A549 (cell line): ENCODE measurements at regions of chr17 and their contacts with region 1.

Region 1: DNA sequence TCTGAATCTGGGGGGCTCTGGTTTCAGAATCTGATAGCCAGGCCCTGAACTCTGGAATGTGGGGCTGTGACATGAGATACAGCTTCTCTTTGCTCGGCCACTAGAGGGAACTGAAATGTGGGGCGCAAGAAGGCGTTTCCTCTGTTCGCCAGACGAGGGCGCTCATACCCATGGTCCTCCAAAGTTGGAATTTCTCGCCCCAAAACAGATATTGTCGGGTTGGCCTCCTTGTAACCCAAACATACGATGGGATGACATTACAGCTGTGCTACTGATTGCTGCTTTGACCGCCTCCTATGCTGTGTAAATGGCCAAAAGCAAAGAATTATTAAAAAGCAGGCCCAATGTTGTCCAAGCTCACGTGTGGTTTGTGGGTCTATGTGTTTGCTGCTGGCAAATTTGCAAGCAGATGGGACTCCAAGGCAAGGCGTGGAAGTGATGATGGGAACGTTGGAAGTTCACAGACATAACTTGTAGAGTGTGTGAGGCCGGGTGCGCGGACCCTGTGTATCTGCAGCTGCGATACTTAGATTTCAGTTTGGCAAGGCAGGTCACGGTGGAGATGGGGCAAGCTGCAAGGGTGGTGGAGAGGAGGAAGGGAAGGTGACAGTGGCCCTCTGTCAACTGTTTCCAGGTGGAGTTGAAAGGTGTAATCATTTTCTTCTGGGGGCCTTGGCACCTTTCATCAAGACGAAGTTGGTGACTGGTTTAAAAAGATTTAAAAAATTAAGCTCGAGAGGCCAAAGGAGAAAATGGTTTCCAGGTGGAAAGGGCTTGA is 13.0 kb upstream of the MSI2 start:
- DNase-seq: peak; percentile 77 to 88
- ATAC-seq: peak; percentile 83 to 95
- H3K4me3 ChIP-seq: no peak overlapping the region
- H3K27ac ChIP-seq: peak overlapping the region; percentile 15 to 47; a peak in 3 of 6 replicates
- H3K4me1 ChIP-seq: peaks cover 8% of the 10 kb centered on the region; the same call in 1 of the 3 replicates
- CTCF ChIP-seq: peak; percentile 100
- EP300 ChIP-seq: no peak
- POLR2A ChIP-seq: no peak
- RAD21 ChIP-seq: peak; percentile 99

Region 2: GRCh38 chr17:57071991-57072944 is 171.1 kb before region 1 on chr17:
- CTCF ChIA-PET with region 1: no interaction called
- POLR2A ChIA-PET with region 1: no interaction called
- DNase-seq: no peak
- ATAC-seq: no peak
- H3K4me3 ChIP-seq: no peak overlapping the region
- H3K27ac ChIP-seq: no peak overlapping the region
- H3K4me1 ChIP-seq: no peaks in the 10 kb centered on the region
- CTCF ChIP-seq: no peak
- EP300 ChIP-seq: no peak
- POLR2A ChIP-seq: no peak
- RAD21 ChIP-seq: no peak

Region 3: GRCh38 chr17:57114085-57114673 is 129.2 kb before region 1 on chr17:
- CTCF ChIA-PET with region 1: no interaction called
- POLR2A ChIA-PET with region 1: no interaction called
- DNase-seq: peak; percentile 57 to 76
- ATAC-seq: peak; percentile 40 to 87; a peak in 3 of 6 replicates
- H3K4me3 ChIP-seq: no peak overlapping the region
- H3K27ac ChIP-seq: no peak overlapping the region
- H3K4me1 ChIP-seq: 0 out of 3 replicates have a peak, but pooled peaks cover under 1% of the 10 kb centered on the region
- CTCF ChIP-seq: peak; percentile 65
- EP300 ChIP-seq: no peak
- POLR2A ChIP-seq: no peak
- RAD21 ChIP-seq: peak; percentile 59 to 74

Region 4: DNA sequence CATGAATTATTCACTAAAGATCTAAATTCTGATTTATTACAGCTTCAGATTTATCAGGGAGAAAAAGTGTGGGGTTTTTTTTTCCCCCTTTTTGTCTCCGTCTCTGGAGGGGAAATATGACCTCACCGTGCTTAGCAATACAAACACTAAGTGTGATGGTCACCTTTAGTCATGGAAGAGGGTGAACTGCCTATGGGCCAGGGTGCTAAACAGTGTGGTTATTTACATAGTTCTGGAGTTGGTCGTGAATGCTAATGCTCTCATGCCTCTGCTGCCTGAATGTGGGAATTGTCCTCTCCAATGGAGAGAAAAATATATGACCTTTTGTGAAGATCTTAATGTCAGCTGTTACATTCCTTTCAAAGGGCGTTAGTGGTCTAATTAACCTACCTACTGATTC is 31.8 kb before region 1 on chr17:
- CTCF ChIA-PET with region 1: interaction called, 15 read pairs
- POLR2A ChIA-PET with region 1: no interaction called
- DNase-seq: peak; percentile 17 to 33
- ATAC-seq: peak; percentile 81 to 84; a peak in 5 of 6 replicates
- H3K4me3 ChIP-seq: no peak overlapping the region
- H3K27ac ChIP-seq: peak overlapping the region in 1 of 2 experiments; percentile 33; a peak in 1 of 6 replicates
- H3K4me1 ChIP-seq: peaks cover 26% of the 10 kb centered on the region
- CTCF ChIP-seq: no peak
- EP300 ChIP-seq: no peak
- POLR2A ChIP-seq: no peak
- RAD21 ChIP-seq: no peak

Region 5: DNA sequence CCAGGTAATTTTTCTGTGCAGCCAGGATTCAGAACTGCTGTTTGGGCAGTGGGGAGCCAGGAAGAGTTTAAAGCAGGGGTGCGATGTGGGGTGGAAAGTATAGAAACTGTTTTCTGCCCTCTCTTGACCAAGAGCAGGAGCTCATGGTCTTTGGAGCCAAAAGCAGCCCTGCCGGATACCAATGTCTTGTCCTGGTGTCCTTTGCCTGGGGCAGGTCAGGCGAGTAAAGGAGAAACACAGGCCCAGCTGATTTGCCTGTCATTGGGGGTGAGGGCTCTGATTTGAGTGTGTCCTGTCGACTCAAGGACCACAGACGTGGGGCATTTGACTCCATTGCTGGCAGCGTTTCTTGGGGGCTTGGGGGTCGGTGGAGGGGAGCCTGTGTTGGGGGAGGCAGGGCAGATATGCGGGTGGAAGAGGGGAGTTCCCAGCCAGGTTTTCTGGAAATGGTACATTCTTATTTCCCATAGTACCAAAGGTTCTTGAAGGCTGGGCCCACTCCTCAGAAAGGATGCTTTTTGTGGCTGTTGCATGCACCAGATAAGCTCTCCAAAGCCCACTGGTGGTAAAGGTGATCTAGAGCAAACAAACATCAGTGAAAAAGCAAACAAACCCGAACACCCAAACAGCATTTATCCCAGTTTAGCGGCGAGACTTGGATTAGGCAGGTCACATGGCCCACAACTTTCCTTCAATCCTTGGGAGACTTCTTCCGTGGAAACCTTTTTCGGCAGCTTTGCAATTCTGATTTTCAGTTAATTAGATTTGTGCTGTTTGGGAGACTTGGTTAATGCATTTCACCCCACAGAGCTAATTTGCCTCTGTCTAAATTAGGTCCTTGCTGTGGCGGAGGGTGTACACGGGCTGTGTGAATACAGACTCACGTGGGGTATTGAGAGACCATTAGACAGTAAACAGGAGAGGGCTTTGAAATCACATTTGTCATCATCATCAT is 72.0 kb after region 1 on chr17:
- CTCF ChIA-PET with region 1: interaction called, 10 read pairs
- POLR2A ChIA-PET with region 1: no interaction called
- DNase-seq: no peak
- ATAC-seq: no peak
- H3K4me3 ChIP-seq: no peak overlapping the region
- H3K27ac ChIP-seq: no peak overlapping the region
- H3K4me1 ChIP-seq: peaks cover 6% of the 10 kb centered on the region; the same call in 2 of the 3 replicates
- CTCF ChIP-seq: no peak
- EP300 ChIP-seq: no peak
- POLR2A ChIP-seq: no peak
- RAD21 ChIP-seq: no peak

Region 6: DNA sequence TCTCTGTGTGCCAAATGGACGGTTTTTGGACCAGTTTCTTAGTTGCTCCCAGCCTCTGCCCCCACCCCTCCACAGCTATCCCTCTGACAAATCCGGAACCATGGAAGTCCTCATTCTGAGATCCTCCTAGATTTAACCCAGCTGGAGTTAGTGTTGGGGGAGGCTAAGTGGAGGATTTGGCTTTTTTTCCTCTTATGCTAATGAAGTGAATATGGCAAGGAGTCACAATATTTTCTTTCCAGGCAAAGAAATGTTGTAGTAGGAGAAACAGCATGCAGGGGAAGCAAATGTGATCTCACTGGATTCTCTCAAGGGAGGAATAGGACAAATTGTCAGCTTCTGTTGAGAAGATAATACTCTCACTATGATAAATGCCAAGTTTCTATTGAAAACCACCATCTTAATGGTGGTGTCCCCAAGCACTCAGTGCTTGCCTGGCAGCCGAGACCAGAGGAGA is 172.4 kb after region 1 on chr17:
- CTCF ChIA-PET with region 1: interaction called, 17 read pairs
- POLR2A ChIA-PET with region 1: no interaction called
- DNase-seq: no peak
- ATAC-seq: no peak
- H3K4me3 ChIP-seq: no peak overlapping the region
- H3K27ac ChIP-seq: no peak overlapping the region
- H3K4me1 ChIP-seq: peaks cover 25% of the 10 kb centered on the region
- CTCF ChIP-seq: no peak
- EP300 ChIP-seq: no peak
- POLR2A ChIP-seq: no peak
- RAD21 ChIP-seq: no peak

Region 7: DNA sequence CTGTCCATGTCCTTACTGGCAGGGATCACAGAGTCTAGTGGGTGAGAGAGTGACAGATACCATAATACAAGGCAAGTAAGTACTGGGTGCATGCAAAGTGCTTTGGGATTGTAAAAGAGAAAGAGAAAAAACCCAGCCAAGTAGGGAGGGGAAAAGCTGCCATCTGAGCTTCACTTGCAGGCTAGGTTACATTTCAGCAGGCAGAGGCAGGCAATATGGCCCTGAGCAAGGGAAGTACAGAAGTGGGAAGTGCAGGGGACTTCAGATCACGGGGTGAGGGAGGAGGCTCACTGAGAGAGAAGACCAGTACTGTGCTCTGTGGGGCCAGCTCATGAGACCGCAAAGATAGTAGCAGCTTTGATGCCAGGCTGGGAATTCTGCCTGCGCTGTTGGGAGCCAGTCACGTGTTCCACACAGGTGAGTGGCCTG is 243.5 kb after region 1 on chr17:
- CTCF ChIA-PET with region 1: interaction called, 15 read pairs
- POLR2A ChIA-PET with region 1: no interaction called
- DNase-seq: no peak
- ATAC-seq: no peak
- H3K4me3 ChIP-seq: no peak overlapping the region
- H3K27ac ChIP-seq: no peak overlapping the region
- H3K4me1 ChIP-seq: peaks cover 7% of the 10 kb centered on the region; the same call in 2 of the 3 replicates
- CTCF ChIP-seq: no peak
- EP300 ChIP-seq: no peak
- POLR2A ChIP-seq: no peak
- RAD21 ChIP-seq: no peak

Region 8: GRCh38 chr17:57671667-57672632 is 428.6 kb after region 1 on chr17:
- CTCF ChIA-PET with region 1: interaction called, 81 read pairs
- POLR2A ChIA-PET with region 1: interaction called, 3 read pairs
- DNase-seq: peak; percentile 81 to 95
- ATAC-seq: peak; percentile 93 to 99
- H3K4me3 ChIP-seq: no peak overlapping the region
- H3K27ac ChIP-seq: peak overlapping the region; percentile 36 to 48; a peak in 4 of 6 replicates
- H3K4me1 ChIP-seq: peaks cover 14% of the 10 kb centered on the region
- CTCF ChIP-seq: peak; percentile 98
- EP300 ChIP-seq: no peak
- POLR2A ChIP-seq: no peak
- RAD21 ChIP-seq: peak; percentile 93 to 96

Region 9: GRCh38 chr17:57833179-57833939 is 590.0 kb after region 1 on chr17:
- CTCF ChIA-PET with region 1: interaction called, 27 read pairs
- POLR2A ChIA-PET with region 1: no interaction called
- DNase-seq: peak; percentile 59 to 68
- ATAC-seq: peak; percentile 71 to 79; a peak in 5 of 6 replicates
- H3K4me3 ChIP-seq: no peak overlapping the region
- H3K27ac ChIP-seq: peak overlapping the region in 1 of 2 experiments; percentile 46; a peak in 3 of 6 replicates
- H3K4me1 ChIP-seq: peaks cover 14% of the 10 kb centered on the region; the same call in 1 of the 3 replicates
- CTCF ChIP-seq: peak; percentile 99
- EP300 ChIP-seq: no peak
- POLR2A ChIP-seq: no peak
- RAD21 ChIP-seq: peak; percentile 86 to 88